CD14-positive monocyte (primary cell): ENCODE measurements at regions of chr15 and their contacts with region 1.

Region 1: GRCh38 chr15:40044717-40045571 is 6.0 kb upstream of the SRP14 start:
- DNase-seq: peak; percentile 85 to 95 (median 92)
- H3K4me3 ChIP-seq: peak overlapping the region in 1 of 3 experiments; percentile 39
- H3K4me3 Mint-ChIP-seq: peak overlapping the region; percentile 69 to 76
- H3K27ac ChIP-seq: peak overlapping the region in 1 of 2 donors; percentile 97
- H3K27ac Mint-ChIP-seq: peak overlapping the region; percentile 47 to 95 (median 81)
- H3K4me1 ChIP-seq: peaks cover 50 to 61% of the 10 kb centered on the region in 2 donors
- H3K4me1 Mint-ChIP-seq: peaks cover 59% of the 10 kb centered on the region
- H3K27me3 ChIP-seq: no peaks in the 10 kb centered on the region
- H3K27me3 Mint-ChIP-seq: peaks cover 0 to 2% (median 0%) of the 10 kb centered on the region in 3 donors
- CTCF ChIP-seq: peak; percentile 92

Region 2: DNA sequence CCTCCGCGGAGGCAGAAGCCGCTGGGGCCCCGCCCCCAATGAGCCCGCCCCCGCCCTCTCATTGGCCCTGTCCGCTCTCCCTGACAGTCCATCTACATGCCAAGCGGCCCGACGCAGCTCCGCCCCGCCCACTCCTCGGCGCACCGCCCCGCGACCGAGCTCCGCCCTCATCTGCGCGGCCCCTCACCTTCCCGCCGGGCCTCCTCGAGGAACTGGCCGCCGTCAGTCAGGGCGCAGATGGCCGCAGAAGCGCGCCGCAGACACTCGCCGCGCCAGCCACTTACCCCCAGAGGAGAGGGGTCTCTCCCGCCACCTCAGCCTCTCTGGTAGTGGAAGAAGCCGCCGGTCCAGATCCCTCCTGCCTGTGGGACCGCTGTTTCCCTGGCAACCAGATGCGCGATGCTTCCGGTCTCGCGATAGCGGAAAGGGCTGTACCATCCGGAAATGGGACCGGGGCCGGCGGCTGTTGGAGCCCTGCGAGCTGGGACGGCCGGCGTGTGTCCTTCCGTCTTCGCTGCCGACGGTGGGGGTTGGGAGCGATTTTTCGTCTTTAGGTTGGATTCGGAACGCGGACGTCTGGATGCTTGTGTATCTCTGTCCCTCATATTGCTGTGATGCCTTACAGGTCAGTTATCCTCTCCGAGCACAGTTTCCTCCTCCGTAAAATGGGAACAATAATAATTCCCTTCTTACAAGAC is 262.4 kb before region 1 on chr15 and contains the start of gene FSIP1:
- intact Hi-C with region 1: loop called in 1 of 2 experiments (anchors 10 kb)
- DNase-seq: peak; percentile 94 to 95 (median 95)
- H3K4me3 ChIP-seq: peak within 1 kb of the TSS; percentile 81 to 91 (median 89)
- H3K4me3 Mint-ChIP-seq: peak within 1 kb of the TSS; percentile 94
- H3K27ac ChIP-seq: peak within 1 kb of the TSS; percentile 45 to 83
- H3K27ac Mint-ChIP-seq: peak within 1 kb of the TSS; percentile 87 to 96 (median 92)
- H3K4me1 ChIP-seq: peaks cover 17 to 20% of the 10 kb centered on the region in 2 donors
- H3K4me1 Mint-ChIP-seq: peaks cover 27% of the 10 kb centered on the region
- H3K27me3 ChIP-seq: no peaks in the 10 kb centered on the region
- H3K27me3 Mint-ChIP-seq: no peaks in the 10 kb centered on the region
- CTCF ChIP-seq: no peak
- polyA plus RNA-seq, gene FSIP1: 0.10 to 0.48 (median 0.21) TPM

Region 3: DNA sequence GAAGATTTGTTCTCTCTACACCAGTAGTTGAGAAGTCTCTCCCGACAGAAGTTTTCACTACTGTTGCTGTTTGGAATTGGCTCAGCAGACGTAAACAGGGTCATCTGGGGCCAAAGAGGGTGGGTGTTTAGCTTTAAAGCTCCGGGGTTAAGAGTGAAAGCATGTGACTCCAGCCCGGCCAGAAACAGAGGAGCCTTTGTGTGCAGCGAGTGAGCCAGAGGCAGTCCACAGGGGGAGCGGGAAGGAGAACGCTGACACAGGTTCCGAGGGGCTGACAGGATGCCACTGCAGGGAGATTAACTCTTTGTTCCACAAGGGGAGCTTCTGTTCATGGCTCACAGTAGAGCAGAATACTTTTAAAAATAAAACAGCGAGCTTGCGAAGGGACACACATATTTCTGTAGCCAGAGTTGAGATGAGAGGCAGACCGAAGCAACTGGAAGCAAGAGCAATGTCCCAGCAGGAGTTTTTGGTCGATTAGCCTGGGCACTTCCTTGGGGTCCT is 36.8 kb after region 1 on chr15:
- intact Hi-C with region 1: loop called in 1 of 2 experiments (anchors 5 kb)
- DNase-seq: peak in 2 of 3 donors; percentile 40 to 41
- H3K4me3 ChIP-seq: peak overlapping the region; percentile 45 to 86 (median 77)
- H3K4me3 Mint-ChIP-seq: peak overlapping the region; percentile 86 to 87
- H3K27ac ChIP-seq: peak overlapping the region; percentile 32 to 87
- H3K27ac Mint-ChIP-seq: peak overlapping the region; percentile 70 to 96 (median 83)
- H3K4me1 ChIP-seq: peaks cover 22 to 31% of the 10 kb centered on the region in 2 donors
- H3K4me1 Mint-ChIP-seq: peaks cover 33% of the 10 kb centered on the region
- H3K27me3 ChIP-seq: no peaks in the 10 kb centered on the region
- H3K27me3 Mint-ChIP-seq: peaks cover 3 to 4% (median 4%) of the 10 kb centered on the region in 3 donors
- CTCF ChIP-seq: no peak

Region 4: GRCh38 chr15:40098489-40099261 is 53.7 kb after region 1 on chr15:
- intact Hi-C with region 1: loop called in 1 of 2 experiments (anchors 2 kb)
- DNase-seq: peak; percentile 87 to 98 (median 91)
- H3K4me3 ChIP-seq: peak overlapping the region in 1 of 3 experiments; percentile 50
- H3K4me3 Mint-ChIP-seq: peak overlapping the region; percentile 75 to 78
- H3K27ac ChIP-seq: peak overlapping the region; percentile 75 to 96
- H3K27ac Mint-ChIP-seq: peak overlapping the region; percentile 91 to 97 (median 93)
- H3K4me1 ChIP-seq: peaks cover 82 to 96% of the 10 kb centered on the region in 2 donors
- H3K4me1 Mint-ChIP-seq: peaks cover 89% of the 10 kb centered on the region
- H3K27me3 ChIP-seq: no peaks in the 10 kb centered on the region
- H3K27me3 Mint-ChIP-seq: peaks cover 1 to 2% (median 2%) of the 10 kb centered on the region in 3 donors
- CTCF ChIP-seq: no peak

Region 5: GRCh38 chr15:40108855-40109735 is 64.2 kb after region 1 on chr15 and contains the start of gene BMF:
- intact Hi-C with region 1: loop called (anchors 2 to 5 kb)
- DNase-seq: peak; percentile 96 to 98 (median 97)
- H3K4me3 ChIP-seq: peak within 1 kb of the TSS; percentile 91 to 93 (median 92)
- H3K4me3 Mint-ChIP-seq: peak within 1 kb of the TSS; percentile 89 to 95
- H3K27ac ChIP-seq: peak within 1 kb of the TSS; percentile 95 to 97
- H3K27ac Mint-ChIP-seq: peak within 1 kb of the TSS; percentile 94 to 99 (median 97)
- H3K4me1 ChIP-seq: peaks cover 47 to 51% of the 10 kb centered on the region in 2 donors
- H3K4me1 Mint-ChIP-seq: peaks cover 48% of the 10 kb centered on the region
- H3K27me3 ChIP-seq: no peaks in the 10 kb centered on the region
- H3K27me3 Mint-ChIP-seq: peaks cover 0 to 3% (median 1%) of the 10 kb centered on the region in 3 donors
- CTCF ChIP-seq: no peak
- polyA plus RNA-seq, gene BMF: 5.6 to 59.6 (median 6.5) TPM

Region 6: DNA sequence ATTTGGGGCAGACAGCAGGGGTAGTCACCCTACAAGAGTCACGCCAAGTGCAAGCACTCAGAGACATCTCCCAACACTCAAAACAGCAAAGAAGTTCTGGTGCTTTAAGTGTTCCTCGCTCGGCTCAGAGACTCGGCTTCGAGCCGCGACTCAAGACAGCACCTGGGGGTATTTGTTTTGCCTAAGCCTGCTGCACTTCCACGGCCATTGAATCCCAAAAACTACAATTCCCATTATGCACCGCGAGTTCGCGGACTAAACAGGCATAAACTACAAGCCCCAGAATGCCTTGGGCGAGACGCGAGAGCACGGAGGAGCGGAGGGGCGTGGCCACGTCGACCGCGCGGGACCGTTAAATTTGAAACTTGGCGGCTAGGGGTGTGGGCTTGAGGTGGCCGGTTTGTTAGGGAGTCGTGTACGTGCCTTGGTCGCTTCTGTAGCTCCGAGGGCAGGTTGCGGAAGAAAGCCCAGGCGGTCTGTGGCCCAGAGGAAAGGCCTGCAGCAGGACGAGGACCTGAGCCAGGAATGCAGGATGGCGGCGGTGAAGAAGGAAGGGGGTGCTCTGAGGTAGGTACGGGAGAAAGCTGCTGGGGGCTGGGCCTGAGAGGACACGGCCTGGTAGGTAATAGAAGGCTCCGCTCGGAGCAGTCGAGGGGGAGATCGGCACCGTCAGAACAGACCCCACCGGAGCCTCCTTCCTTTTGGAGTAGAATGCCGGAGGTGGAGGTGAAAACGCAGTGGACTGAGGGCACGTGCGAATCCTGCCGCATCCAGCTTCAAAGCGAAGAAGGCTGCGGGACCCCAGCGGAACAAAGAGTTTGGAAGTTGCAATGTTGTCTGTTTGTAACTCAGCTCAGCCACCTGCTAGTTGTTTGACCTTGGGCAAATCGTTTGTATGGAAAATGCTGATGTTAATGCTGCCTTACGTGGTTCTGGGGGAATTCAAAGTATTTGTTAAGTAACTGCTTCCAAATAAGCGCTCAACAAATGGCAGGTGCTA is 116.0 kb after region 1 on chr15 and contains the start of gene BUB1B:
- intact Hi-C with region 1: loop called in 1 of 2 experiments (anchors 5 kb)
- DNase-seq: peak; percentile 85 to 91 (median 87)
- H3K4me3 ChIP-seq: peak within 1 kb of the TSS; percentile 81 to 88 (median 87)
- H3K4me3 Mint-ChIP-seq: no peak within 1 kb of the TSS
- H3K27ac ChIP-seq: peak within 1 kb of the TSS in 1 of 2 donors; percentile 59
- H3K27ac Mint-ChIP-seq: no peak within 1 kb of the TSS
- H3K4me1 ChIP-seq: peaks cover 21 to 25% of the 10 kb centered on the region in 2 donors
- H3K4me1 Mint-ChIP-seq: peaks cover 8% of the 10 kb centered on the region
- H3K27me3 ChIP-seq: no peaks in the 10 kb centered on the region
- H3K27me3 Mint-ChIP-seq: peaks cover 0 to 7% (median 0%) of the 10 kb centered on the region in 3 donors
- CTCF ChIP-seq: no peak
- polyA plus RNA-seq, gene BUB1B: 0.01 to 0.51 TPM in 2 of 3 donors, not detected in the other